CD8-positive, alpha-beta T cell (primary cell): ENCODE measurements at regions of chr11 and their contacts with region 1.

Region 1: GRCh38 chr11:124586238-124586860 is 16.6 kb downstream of the OR8A1 start:
- DNase-seq: peak in 8 of 9 experiments; percentile 15 to 59 (median 32)
- ATAC-seq: no peak
- H3K4me3 ChIP-seq: no peak overlapping the region
- H3K4me3 Mint-ChIP-seq: no peak overlapping the region
- H3K27ac ChIP-seq: no peak overlapping the region
- H3K27ac Mint-ChIP-seq: no peak overlapping the region
- H3K4me1 ChIP-seq: no peaks in the 10 kb centered on the region
- H3K4me1 Mint-ChIP-seq: no peaks in the 10 kb centered on the region
- H3K27me3 ChIP-seq: no peaks in the 10 kb centered on the region
- H3K27me3 Mint-ChIP-seq: peaks cover 24% of the 10 kb centered on the region
- CTCF ChIP-seq: peak; percentile 72

Region 2: DNA sequence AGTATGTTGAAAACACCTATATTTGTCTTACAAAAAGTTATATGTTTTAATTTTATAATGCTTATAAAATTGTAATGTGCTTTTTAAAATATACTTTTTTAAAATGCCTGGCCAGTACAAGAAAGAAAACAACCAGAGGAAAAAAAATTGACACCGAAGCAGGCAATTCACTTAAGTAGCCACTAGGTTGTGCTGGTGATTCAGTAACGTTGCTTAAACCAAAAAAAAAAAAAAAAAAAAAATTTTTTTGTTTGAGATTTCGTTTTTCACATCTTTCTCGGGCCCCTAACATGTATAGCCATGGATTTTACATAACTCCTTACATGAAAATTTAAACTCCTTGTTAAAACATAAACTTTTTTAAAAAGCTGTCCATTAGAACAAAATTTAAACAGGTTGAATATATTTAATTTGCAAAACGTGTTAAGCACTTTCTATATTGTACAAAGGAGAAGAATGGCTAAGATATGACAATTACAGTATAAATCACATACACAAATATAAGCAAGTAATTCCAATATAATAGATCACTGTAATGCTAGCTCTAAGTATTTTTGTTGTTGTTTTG is 170.9 kb before region 1 on chr11:
- CTCF ChIA-PET with region 1: interaction called, 3 read pairs
- POLR2A ChIA-PET with region 1: no interaction called
- intact Hi-C with region 1: loop called (anchors 1 to 2 kb)
- DNase-seq: peak in 2 of 9 experiments; percentile 30 to 34
- ATAC-seq: no peak
- H3K4me3 ChIP-seq: no peak overlapping the region
- H3K4me3 Mint-ChIP-seq: no peak overlapping the region
- H3K27ac ChIP-seq: no peak overlapping the region
- H3K27ac Mint-ChIP-seq: no peak overlapping the region
- H3K4me1 ChIP-seq: no peaks in the 10 kb centered on the region
- H3K4me1 Mint-ChIP-seq: no peaks in the 10 kb centered on the region
- H3K27me3 ChIP-seq: peaks cover 0 to 6% of the 10 kb centered on the region in 2 experiments
- H3K27me3 Mint-ChIP-seq: peaks cover 8% of the 10 kb centered on the region
- CTCF ChIP-seq: peak; percentile 83